PC-9 (cell line): ENCODE measurements at regions of chr3 and their contacts with region 1.

Region 1: DNA sequence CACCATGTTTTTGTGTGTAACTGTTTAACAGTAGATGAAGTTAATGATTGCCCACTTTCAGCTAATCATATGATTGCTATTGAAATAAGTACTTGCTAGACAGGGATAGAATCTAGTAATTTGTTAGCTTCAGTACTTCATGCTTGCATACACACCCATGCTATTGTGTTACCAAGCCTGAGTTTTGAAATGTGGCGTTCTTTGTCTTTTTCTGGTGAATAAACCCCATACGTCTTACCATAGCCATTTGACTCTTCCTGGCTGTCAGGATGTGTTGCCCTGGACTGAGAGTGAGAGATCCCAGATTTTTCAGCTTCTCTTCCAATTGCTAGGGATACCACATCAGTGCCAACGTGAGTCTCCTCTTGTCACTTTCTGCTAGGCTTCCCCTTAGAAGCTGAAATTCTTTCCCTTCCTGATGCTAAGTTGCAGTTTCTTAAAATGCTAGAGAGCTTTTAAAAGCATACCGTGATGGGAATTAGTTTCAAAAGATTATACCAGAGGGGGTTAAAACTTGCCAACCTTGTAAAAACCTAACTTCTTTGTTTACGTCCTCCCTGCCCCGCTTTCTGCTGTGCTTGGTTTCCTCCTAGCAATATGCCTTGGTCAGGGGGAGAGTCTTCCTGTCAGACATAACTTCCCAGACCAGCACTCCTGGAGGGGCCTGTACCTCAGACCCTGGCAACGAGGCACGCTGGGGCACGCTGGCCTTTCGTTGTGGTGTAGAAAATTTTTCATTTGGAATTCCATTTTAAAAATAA is 62.9 kb upstream of the ULK4 start:
- DNase-seq: no peak
- H3K4me3 ChIP-seq: no peak overlapping the region
- H3K27ac ChIP-seq: no peak overlapping the region
- H3K4me1 ChIP-seq: peaks cover 35% of the 10 kb centered on the region
- H3K27me3 ChIP-seq: no peaks in the 10 kb centered on the region
- CTCF ChIP-seq: no peak

Region 2: GRCh38 chr3:41881233-41881821 is 143.4 kb before region 1 on chr3:
- CTCF ChIA-PET with region 1: no interaction called
- POLR2A ChIA-PET with region 1: no interaction called
- intact Hi-C with region 1: no loop called
- DNase-seq: peak; percentile 13 to 32
- H3K4me3 ChIP-seq: no peak overlapping the region
- H3K27ac ChIP-seq: no peak overlapping the region
- H3K4me1 ChIP-seq: no peaks in the 10 kb centered on the region
- H3K27me3 ChIP-seq: no peaks in the 10 kb centered on the region
- CTCF ChIP-seq: peak; percentile 77

Region 3: GRCh38 chr3:41900265-41900664 is 124.5 kb before region 1 on chr3:
- CTCF ChIA-PET with region 1: no interaction called
- POLR2A ChIA-PET with region 1: interaction called, 10 read pairs
- intact Hi-C with region 1: loop called (anchors 10 kb)
- DNase-seq: peak; percentile 24 to 47
- H3K4me3 ChIP-seq: no peak overlapping the region
- H3K27ac ChIP-seq: no peak overlapping the region
- H3K4me1 ChIP-seq: 0 out of 2 replicates have a peak, but pooled peaks cover 5% of the 10 kb centered on the region
- H3K27me3 ChIP-seq: no peaks in the 10 kb centered on the region
- CTCF ChIP-seq: no peak